HCT116 (cell line): ENCODE measurements at regions of chr13 and their contacts with region 1.

Region 1: DNA sequence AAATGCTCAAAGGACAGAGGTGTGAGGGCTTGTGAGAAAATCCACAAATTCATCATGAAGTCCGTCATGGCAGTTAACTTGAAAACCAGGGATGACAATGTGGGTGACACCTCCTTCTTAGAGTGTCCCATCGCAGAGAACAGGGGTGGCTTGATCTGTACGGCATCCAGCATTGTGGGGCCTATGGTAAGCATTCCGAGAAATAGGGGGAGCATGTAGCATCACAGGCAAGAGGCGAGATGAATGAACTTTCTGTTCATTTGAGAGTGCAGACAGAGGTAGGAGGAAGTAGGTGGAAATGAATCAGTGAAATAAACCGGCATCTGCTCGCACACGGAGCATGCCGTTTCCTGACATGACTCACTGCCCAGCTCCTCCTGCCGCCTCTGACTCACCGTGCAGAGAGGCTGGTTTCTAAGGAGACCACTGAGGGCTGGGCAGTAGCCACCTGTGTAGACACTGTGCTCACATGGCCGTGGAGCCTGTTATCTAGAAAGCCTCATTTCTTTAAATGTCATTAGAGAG is 339.0 kb downstream of the RFC3 start:
- DNase-seq: peak; percentile 92
- ATAC-seq: peak; percentile 93
- H3K4me3 ChIP-seq: peak overlapping the region; percentile 26 to 56
- H3K27ac ChIP-seq: peak overlapping the region; percentile 78
- H3K4me1 ChIP-seq: peaks cover 24 to 37% of the 10 kb centered on the region in 2 experiments
- H3K27me3 ChIP-seq: no peaks in the 10 kb centered on the region
- CTCF ChIP-seq: no peak
- POLR2A ChIP-seq: no peak
- RAD21 ChIP-seq: no peak

Region 2: DNA sequence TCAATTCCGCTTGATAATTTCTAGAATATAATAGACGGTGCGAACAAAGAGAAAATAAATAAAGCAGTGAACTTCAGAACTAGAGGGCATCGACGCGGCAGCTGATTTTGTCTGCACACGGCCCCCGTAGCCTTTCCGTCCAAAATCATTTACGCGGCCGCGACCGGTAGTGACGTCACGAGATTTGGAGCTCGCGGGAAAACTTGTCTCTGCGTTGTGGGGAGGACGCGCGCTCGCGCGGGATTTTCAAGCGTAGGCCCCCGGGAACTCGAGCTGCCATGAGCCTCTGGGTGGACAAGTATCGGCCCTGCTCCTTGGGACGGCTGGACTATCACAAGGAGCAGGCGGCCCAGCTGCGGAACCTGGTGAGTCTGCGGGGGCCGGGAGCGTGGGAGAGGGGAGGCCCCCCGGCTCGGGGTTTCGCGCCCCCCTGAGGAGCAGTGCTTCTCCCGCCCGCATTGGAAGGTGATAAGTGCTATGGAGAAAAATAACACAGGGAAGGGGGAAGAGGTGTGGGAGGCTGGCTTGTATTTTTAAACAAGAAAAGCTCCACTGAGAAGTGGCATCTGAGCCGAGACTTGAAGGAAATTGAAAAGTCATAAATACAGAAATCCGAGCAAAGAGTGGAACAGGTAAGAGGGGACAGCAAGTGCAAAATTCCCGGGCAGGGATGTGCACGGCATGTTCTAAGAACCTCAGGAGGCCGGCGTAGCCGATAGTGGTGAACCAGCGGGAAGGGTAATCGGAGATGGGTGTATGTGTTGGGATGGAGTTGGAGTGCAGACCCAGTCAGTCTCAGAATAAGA is 338.8 kb before region 1 on chr13 and contains the start of gene RFC3:
- CTCF ChIA-PET with region 1: no interaction called
- POLR2A ChIA-PET with region 1: no interaction called
- RAD21 ChIA-PET with region 1: no interaction called
- intact Hi-C with region 1: loop called (anchors 5 kb)
- DNase-seq: peak; percentile 94
- ATAC-seq: peak; percentile 95
- H3K4me3 ChIP-seq: peak within 1 kb of the TSS; percentile 77 to 87
- H3K27ac ChIP-seq: peak within 1 kb of the TSS; percentile 71
- H3K4me1 ChIP-seq: peaks cover 2 to 10% of the 10 kb centered on the region in 2 experiments; a peak in 3 of 4 replicates
- H3K27me3 ChIP-seq: no peaks in the 10 kb centered on the region
- CTCF ChIP-seq: no peak
- POLR2A ChIP-seq: peak; percentile 83
- RAD21 ChIP-seq: no peak
- total RNA-seq, gene RFC3: 38.2 TPM